IMR-90 (cell line): ENCODE measurements at regions of chr6 and their contacts with region 1.

Region 1: GRCh38 chr6:87237804-87238203 is 82.4 kb downstream of the ZNF292 start:
- DNase-seq: peak; percentile 45
- ATAC-seq: peak; percentile 61
- H3K4me3 ChIP-seq: no peak overlapping the region
- H3K27ac ChIP-seq: no peak overlapping the region
- H3K4me1 ChIP-seq: no peaks in the 10 kb centered on the region
- H3K27me3 ChIP-seq: no peaks in the 10 kb centered on the region
- CTCF ChIP-seq: peak; percentile 55
- POLR2A ChIP-seq: no peak
- RAD21 ChIP-seq: peak; percentile 44

Region 2: GRCh38 chr6:87139236-87139635 is 98.6 kb before region 1 on chr6:
- CTCF ChIA-PET with region 1: interaction called, 10 read pairs
- POLR2A ChIA-PET with region 1: no interaction called
- dilution Hi-C with region 1: no loop called
- in situ Hi-C with region 1: no loop called
- intact Hi-C with region 1: loop called (anchors 5 kb)
- DNase-seq: peak; percentile 62
- ATAC-seq: peak; percentile 79
- H3K4me3 ChIP-seq: no peak overlapping the region
- H3K27ac ChIP-seq: no peak overlapping the region
- H3K4me1 ChIP-seq: no peaks in the 10 kb centered on the region
- H3K27me3 ChIP-seq: peaks cover 2% of the 10 kb centered on the region
- CTCF ChIP-seq: peak; percentile 71
- POLR2A ChIP-seq: no peak
- RAD21 ChIP-seq: peak; percentile 81

Region 3: DNA sequence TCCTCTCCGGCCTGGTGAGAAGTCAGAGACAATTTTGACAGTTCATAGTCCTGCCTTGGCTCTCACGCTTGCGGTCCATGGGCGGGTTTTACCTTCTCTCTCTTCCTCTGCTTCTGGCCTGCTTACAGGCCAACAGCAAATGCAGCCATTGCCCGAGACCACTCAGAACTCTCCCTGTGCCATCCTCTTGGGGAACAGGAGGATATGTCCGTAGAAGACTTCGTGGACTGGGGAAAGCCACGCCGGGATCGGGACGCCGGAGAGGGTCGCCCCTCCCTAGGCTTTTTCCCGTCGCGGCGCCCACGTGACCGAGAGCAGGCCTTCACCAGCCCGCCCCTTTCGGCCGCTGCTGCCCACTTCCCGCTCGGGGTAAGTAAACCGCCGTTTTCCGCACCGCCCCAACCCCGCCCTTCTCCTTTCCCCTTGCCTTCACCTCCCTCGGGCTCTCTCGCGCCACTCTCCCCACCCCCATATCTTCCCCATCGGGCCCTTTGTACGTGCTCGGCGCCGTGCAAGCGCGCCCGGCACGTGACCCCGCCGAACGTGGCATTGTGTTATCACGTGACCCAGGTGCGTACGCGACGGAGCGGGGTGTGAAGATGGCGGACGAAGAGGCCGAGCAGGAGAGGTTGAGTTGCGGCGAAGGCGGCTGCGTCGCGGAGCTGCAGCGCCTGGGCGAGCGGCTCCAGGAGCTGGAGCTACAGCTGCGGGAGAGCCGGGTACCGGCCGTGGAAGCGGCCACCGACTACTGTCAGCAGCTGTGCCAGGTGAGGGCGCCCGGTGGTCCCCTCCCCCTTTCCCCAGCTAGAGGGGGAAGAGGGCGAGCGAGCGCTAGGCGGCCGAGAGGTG is 82.6 kb before region 1 on chr6 and contains the start of gene ZNF292:
- CTCF ChIA-PET with region 1: no interaction called
- POLR2A ChIA-PET with region 1: no interaction called
- dilution Hi-C with region 1: no loop called
- in situ Hi-C with region 1: no loop called
- intact Hi-C with region 1: loop called (anchors 2 kb)
- DNase-seq: peak; percentile 97
- ATAC-seq: peak; percentile 84
- H3K4me3 ChIP-seq: peak within 1 kb of the TSS; percentile 68
- H3K27ac ChIP-seq: peak within 1 kb of the TSS; percentile 94
- H3K4me1 ChIP-seq: peaks cover 13% of the 10 kb centered on the region
- H3K27me3 ChIP-seq: no peaks in the 10 kb centered on the region
- CTCF ChIP-seq: no peak
- POLR2A ChIP-seq: peak; percentile 59
- RAD21 ChIP-seq: no peak; the same call in 1 of the 2 replicates
- total RNA-seq, gene ZNF292: 28.3 and 36.9 TPM in 2 replicates

Region 4: GRCh38 chr6:88748141-88748540 is 1510.3 kb after region 1 on chr6:
- CTCF ChIA-PET with region 1: no interaction called
- POLR2A ChIA-PET with region 1: no interaction called
- dilution Hi-C with region 1: no loop called
- in situ Hi-C with region 1: no loop called
- intact Hi-C with region 1: loop called (anchors 5 kb)
- DNase-seq: peak; percentile 25
- ATAC-seq: no peak
- H3K4me3 ChIP-seq: no peak overlapping the region
- H3K27ac ChIP-seq: no peak overlapping the region
- H3K4me1 ChIP-seq: peaks cover 2% of the 10 kb centered on the region; the same call in 1 of the 2 replicates
- H3K27me3 ChIP-seq: no peaks in the 10 kb centered on the region
- CTCF ChIP-seq: no peak
- POLR2A ChIP-seq: no peak
- RAD21 ChIP-seq: no peak

Region 5: DNA sequence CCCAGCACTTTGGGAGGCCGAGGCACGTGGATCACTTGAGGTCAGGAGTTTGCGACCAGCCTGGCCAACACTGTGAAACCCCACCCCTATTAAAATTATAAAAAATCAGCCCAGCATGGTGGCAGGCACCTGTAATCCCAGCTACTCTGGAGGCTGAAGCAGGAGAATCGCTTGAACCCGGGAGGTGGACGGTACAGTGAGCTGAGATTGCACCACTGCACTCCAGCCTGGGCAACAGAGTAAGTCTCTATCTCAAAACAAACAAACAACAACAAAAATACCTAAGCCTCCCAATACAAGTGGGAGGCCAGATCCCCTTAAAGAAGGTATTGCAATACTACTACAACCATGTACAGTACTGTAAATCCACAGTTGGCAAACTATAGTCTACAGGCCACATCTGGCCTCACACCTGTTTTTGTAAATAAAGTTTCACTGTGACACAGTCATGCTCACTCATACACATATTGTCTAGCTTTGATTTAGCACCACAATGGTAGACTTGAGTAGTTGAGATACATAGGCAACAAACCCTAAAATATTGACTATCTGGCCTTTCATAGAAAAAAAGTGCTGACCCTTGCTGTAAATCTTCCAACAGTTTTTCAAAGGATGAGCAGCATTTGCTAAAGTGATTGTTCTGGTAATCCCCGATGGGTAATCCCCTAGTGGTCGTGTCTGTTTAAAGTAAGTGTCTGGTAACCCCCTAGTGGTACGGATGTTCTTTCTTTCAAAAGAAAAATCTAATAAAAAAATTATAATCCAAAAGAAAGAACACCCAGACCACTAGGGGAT is 1523.6 kb after region 1 on chr6:
- CTCF ChIA-PET with region 1: no interaction called
- POLR2A ChIA-PET with region 1: no interaction called
- dilution Hi-C with region 1: no loop called
- in situ Hi-C with region 1: no loop called
- intact Hi-C with region 1: no loop called
- DNase-seq: no peak
- ATAC-seq: no peak
- H3K4me3 ChIP-seq: no peak overlapping the region
- H3K27ac ChIP-seq: no peak overlapping the region
- H3K4me1 ChIP-seq: peaks cover 3% of the 10 kb centered on the region; the same call in 1 of the 2 replicates
- H3K27me3 ChIP-seq: no peaks in the 10 kb centered on the region
- CTCF ChIP-seq: no peak
- POLR2A ChIP-seq: no peak
- RAD21 ChIP-seq: no peak